Ascending aorta (tissue), 2 donors: ENCODE measurements at regions of chr6 and their contacts with region 1.

Region 1: DNA sequence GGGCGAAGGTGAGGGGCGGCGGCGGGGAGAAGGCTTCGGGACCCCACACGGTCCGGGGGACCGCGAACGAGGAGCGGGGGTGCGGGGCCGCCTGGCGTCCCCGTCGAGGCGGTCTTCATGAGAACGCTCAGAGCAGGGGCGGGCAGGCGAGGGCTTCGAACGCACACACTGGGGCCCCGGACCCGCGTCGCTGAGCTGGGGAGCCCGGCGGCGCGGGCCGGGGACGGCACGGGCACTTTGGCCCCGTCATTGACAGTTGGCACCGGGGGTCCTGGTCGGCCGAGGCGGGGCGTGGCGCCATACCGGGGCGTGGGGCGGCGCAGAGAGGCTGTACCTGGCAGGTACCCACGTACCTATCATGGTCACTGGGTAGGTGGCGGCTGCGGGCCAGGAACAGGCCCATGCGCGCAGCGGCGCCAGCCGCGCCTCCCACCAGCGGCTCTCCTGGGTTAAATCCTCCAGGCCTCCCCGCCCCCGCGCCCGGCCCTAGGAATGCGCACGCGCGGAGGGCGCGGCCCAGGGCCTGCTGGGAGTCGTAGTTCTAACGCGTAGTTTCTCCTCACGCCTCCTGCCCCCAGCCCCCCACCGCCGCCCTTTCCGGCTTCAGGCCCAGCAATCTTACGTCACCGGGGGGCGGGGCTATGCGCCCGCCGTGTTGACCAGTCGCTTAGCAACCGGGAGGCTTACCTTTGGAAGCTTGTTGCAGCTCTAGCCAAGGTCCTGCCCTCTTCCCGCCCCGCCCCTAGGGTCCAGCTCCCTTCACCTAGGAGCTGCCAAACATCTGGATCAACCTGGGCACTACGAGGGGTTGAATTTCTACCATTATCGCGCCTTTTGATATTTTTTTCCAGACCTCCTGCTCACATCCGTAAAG is at the starts of genes PACRG and PRKN:
- DNase-seq: peak; percentile 94 to 100
- H3K4me3 ChIP-seq: peak within 1 kb of the TSS; percentile 74 to 100
- H3K27ac ChIP-seq: peak within 1 kb of the TSS; percentile 76 to 77
- H3K4me1 ChIP-seq: peaks cover 0 to 3% of the 10 kb centered on the region in 2 donors
- H3K27me3 ChIP-seq: no peaks in the 10 kb centered on the region
- CTCF ChIP-seq: no peak
- total RNA-seq, gene PACRG: not detected
- total RNA-seq, gene PRKN: 2.6 TPM

Region 2: DNA sequence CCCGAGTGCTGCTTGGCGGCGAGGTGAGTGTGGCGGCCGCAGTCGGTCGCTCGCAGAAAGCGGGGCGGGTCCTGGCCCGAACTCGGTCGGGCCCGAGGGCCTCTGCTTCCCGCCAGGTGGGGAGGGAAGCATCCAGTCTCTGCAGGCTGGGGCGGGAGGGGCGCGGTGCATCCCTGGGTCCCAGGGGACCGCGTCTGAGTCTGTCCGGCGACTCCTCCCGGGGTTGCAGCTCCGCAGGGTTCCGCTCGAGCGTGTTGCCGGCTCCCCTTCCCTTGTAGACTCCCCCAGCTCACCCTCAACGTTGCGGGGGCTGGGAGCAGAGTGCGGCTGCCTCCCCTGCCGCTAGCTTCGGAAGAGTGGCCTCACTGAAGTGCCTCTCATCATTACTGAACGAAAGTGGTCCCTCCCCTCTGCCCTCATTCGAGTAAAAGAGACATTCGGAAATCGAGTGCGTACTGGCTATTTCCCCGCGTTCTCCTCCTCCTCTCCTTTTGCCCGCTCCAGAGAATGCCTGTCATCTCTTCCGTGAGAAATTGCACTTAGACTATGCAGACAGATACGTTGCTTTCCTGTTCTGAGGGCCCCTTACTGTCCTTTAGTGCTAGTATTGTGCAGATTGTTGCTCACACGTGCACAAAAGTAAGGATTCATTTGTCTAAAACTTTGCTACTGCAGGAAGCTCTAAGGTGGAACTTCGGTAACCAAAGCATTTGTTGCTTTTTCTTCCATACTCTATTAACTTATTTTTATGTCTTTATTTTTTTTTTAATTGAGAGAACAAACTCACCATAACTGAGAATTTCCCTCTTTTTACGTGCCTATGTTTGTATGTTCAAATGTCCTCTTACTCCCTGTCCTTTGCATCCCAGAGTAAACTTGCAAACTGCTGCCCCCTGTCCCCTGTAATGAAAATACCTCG is 1735.2 kb before region 1 on chr6:
- intact Hi-C with region 1: loop called (anchors 5 kb)
- DNase-seq: no peak
- H3K4me3 ChIP-seq: peak overlapping the region; percentile 81 to 85
- H3K27ac ChIP-seq: peak overlapping the region; percentile 90 to 95
- H3K4me1 ChIP-seq: peaks cover 2 to 11% of the 10 kb centered on the region in 2 donors
- H3K27me3 ChIP-seq: no peaks in the 10 kb centered on the region
- CTCF ChIP-seq: peak; percentile 29 to 60 (median 53)

Region 3: GRCh38 chr6:161273752-161274487 is 1453.6 kb before region 1 on chr6 and contains the start of gene AGPAT4:
- intact Hi-C with region 1: loop called (anchors 5 kb)
- DNase-seq: peak; percentile 44 to 90
- H3K4me3 ChIP-seq: peak within 1 kb of the TSS; percentile 74 to 79
- H3K27ac ChIP-seq: peak within 1 kb of the TSS; percentile 56 to 71
- H3K4me1 ChIP-seq: peaks cover 0 to 4% of the 10 kb centered on the region in 2 donors
- H3K27me3 ChIP-seq: no peaks in the 10 kb centered on the region
- CTCF ChIP-seq: no peak
- total RNA-seq, gene AGPAT4: 6.8 TPM

Region 4: DNA sequence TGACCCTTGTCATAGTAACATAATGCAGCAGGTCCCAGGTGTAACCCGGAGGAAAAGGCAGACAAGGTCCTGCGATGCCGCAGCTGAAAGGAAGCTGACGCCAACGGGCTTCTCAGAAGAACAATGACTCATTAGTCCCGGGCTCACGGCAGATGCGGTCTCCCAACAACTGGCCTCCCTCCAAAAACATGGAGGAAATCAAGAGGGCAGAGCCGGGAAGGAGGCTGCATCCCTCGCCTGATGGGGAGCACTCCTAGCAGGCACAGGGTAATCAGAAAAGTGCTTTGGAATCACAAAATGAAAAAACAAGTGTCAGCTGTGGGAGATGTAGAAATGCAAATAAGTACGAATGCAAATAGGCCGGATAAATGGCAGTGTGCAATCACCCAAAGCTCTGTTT is 1288.5 kb before region 1 on chr6:
- intact Hi-C with region 1: loop called (anchors 10 kb)
- DNase-seq: peak in 1 of 2 donors; percentile 74
- H3K4me3 ChIP-seq: peak overlapping the region; percentile 14 to 21
- H3K27ac ChIP-seq: peak overlapping the region in 1 of 2 donors; percentile 12
- H3K4me1 ChIP-seq: peaks cover 0 to 6% of the 10 kb centered on the region in 2 donors
- H3K27me3 ChIP-seq: no peaks in the 10 kb centered on the region
- CTCF ChIP-seq: no peak

Region 5: GRCh38 chr6:162488444-162488843 is 239.1 kb before region 1 on chr6:
- intact Hi-C with region 1: no loop called
- DNase-seq: no peak
- H3K4me3 ChIP-seq: no peak overlapping the region
- H3K27ac ChIP-seq: no peak overlapping the region
- H3K4me1 ChIP-seq: no peaks in the 10 kb centered on the region
- H3K27me3 ChIP-seq: no peaks in the 10 kb centered on the region
- CTCF ChIP-seq: no peak

Region 6: DNA sequence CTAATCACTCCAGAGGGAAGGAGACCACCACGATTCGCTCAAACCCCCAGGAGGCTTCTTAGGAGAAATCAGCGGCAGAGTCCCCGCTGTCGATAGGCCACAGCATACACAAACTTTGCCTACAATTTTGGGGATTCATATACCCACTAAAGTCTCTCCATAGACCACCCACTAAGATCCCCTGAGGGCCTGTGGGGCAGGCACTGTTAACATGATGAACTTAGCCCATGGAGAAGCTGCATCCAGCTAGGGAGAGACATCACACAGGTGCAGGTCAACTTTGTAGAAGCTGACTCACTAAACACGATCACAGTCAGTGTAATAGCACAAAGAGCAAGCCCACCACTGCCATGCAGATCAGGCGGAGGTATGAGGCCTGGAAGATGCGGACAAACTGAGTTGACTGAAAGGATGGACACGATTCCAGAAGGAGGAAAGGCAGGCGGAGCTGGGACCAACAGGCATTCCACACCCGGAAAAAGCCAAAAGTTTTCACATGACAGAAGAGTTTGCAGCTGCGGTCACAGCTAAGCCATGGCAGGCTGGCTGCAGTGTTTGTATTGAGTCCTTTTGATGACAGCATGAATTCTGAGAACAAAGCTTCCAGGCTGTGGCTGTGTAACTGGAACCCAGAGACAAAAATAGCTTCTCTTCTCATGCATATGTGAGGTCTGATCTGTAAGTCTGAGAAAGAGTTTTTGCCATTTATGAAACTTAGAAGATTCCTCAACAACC is 611.3 kb after region 1 on chr6:
- intact Hi-C with region 1: loop called (anchors 10 kb)
- DNase-seq: no peak
- H3K4me3 ChIP-seq: no peak overlapping the region
- H3K27ac ChIP-seq: peak overlapping the region; percentile 1 to 30
- H3K4me1 ChIP-seq: peaks cover 3 to 13% of the 10 kb centered on the region in 2 donors
- H3K27me3 ChIP-seq: no peaks in the 10 kb centered on the region
- CTCF ChIP-seq: no peak

Region 7: GRCh38 chr6:164085091-164086075 is 1357.8 kb after region 1 on chr6:
- intact Hi-C with region 1: loop called (anchors 5 kb)
- DNase-seq: peak; percentile 53 to 91
- H3K4me3 ChIP-seq: peak overlapping the region in 1 of 2 donors; percentile 62
- H3K27ac ChIP-seq: peak overlapping the region; percentile 93 to 96
- H3K4me1 ChIP-seq: peaks cover 0 to 12% of the 10 kb centered on the region in 2 donors
- H3K27me3 ChIP-seq: no peaks in the 10 kb centered on the region
- CTCF ChIP-seq: no peak